B cell (primary cell): ENCODE measurements at regions of chr1 and their contacts with region 1.

Region 1: GRCh38 chr1:68120136-68120791 is 69.8 kb upstream of the DIRAS3 start:
- DNase-seq: peak; percentile 66
- ATAC-seq: peak; percentile 56
- H3K4me3 ChIP-seq: no peak overlapping the region
- H3K4me3 Mint-ChIP-seq: no peak overlapping the region
- H3K27ac ChIP-seq: no peak overlapping the region
- H3K27ac Mint-ChIP-seq: no peak overlapping the region
- H3K4me1 ChIP-seq: peaks cover 2 to 3% of the 10 kb centered on the region in 2 donors
- H3K4me1 Mint-ChIP-seq: peaks cover 1% of the 10 kb centered on the region
- H3K27me3 ChIP-seq: no peaks in the 10 kb centered on the region
- H3K27me3 Mint-ChIP-seq: no peaks in the 10 kb centered on the region
- CTCF ChIP-seq: peak; percentile 80

Region 2: GRCh38 chr1:67908250-67908936 is 211.9 kb before region 1 on chr1:
- CTCF ChIA-PET with region 1: no interaction called
- POLR2A ChIA-PET with region 1: no interaction called
- intact Hi-C with region 1: no loop called
- DNase-seq: no peak
- ATAC-seq: no peak
- H3K4me3 ChIP-seq: no peak overlapping the region
- H3K4me3 Mint-ChIP-seq: no peak overlapping the region
- H3K27ac ChIP-seq: no peak overlapping the region
- H3K27ac Mint-ChIP-seq: no peak overlapping the region
- H3K4me1 ChIP-seq: no peaks in the 10 kb centered on the region
- H3K4me1 Mint-ChIP-seq: no peaks in the 10 kb centered on the region
- H3K27me3 ChIP-seq: peaks cover 0 to 3% (median 0%) of the 10 kb centered on the region in 4 experiments
- H3K27me3 Mint-ChIP-seq: peaks cover 3% of the 10 kb centered on the region
- CTCF ChIP-seq: no peak

Region 3: GRCh38 chr1:67945733-67946374 is 174.4 kb before region 1 on chr1:
- CTCF ChIA-PET with region 1: no interaction called
- POLR2A ChIA-PET with region 1: no interaction called
- intact Hi-C with region 1: no loop called
- DNase-seq: no peak
- ATAC-seq: no peak
- H3K4me3 ChIP-seq: no peak overlapping the region
- H3K4me3 Mint-ChIP-seq: no peak overlapping the region
- H3K27ac ChIP-seq: no peak overlapping the region
- H3K27ac Mint-ChIP-seq: no peak overlapping the region
- H3K4me1 ChIP-seq: no peaks in the 10 kb centered on the region
- H3K4me1 Mint-ChIP-seq: no peaks in the 10 kb centered on the region
- H3K27me3 ChIP-seq: no peaks in the 10 kb centered on the region
- H3K27me3 Mint-ChIP-seq: peaks cover 3% of the 10 kb centered on the region
- CTCF ChIP-seq: no peak

Region 4: GRCh38 chr1:68103884-68104554 is 16.2 kb before region 1 on chr1:
- CTCF ChIA-PET with region 1: interaction called, 36 read pairs
- POLR2A ChIA-PET with region 1: no interaction called
- intact Hi-C with region 1: no loop called
- DNase-seq: no peak
- ATAC-seq: no peak
- H3K4me3 ChIP-seq: no peak overlapping the region
- H3K4me3 Mint-ChIP-seq: no peak overlapping the region
- H3K27ac ChIP-seq: no peak overlapping the region
- H3K27ac Mint-ChIP-seq: no peak overlapping the region
- H3K4me1 ChIP-seq: no peaks in the 10 kb centered on the region
- H3K4me1 Mint-ChIP-seq: no peaks in the 10 kb centered on the region
- H3K27me3 ChIP-seq: peaks cover 0 to 5% (median 0%) of the 10 kb centered on the region in 4 experiments
- H3K27me3 Mint-ChIP-seq: peaks cover 23% of the 10 kb centered on the region
- CTCF ChIP-seq: no peak

Region 5: DNA sequence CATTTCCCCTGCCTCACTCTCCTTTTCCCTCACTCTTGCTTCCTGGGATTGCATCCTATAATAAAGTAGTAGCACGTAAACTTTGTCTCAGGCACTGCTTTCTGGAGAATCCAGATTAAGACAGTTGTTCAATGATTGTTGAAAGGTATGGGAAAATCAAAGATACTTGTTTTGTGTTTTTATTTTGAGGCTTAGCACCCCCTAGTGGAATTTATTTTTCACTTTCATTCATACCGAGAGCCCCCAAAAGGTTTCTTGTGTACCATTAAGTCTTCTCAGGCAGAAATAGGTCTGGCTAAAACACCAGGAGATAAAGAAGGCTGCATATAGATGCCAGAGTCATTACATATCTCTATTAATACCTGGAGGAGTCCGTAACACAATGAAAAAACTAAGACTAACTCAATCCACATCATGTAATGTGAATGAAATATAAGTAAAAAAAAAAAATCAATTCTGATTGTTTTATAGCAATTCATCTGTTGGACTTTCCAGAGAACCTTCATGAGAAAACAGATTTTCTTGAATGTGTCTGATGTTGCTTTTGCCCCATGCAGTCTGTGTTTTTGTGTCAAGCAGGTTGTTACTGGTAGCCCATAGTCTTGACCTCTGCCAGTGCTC is 226.0 kb after region 1 on chr1:
- CTCF ChIA-PET with region 1: interaction called, 3 read pairs
- POLR2A ChIA-PET with region 1: no interaction called
- intact Hi-C with region 1: loop called (anchors 10 kb)
- DNase-seq: no peak
- ATAC-seq: no peak
- H3K4me3 ChIP-seq: no peak overlapping the region
- H3K4me3 Mint-ChIP-seq: peak overlapping the region; percentile 12
- H3K27ac ChIP-seq: no peak overlapping the region
- H3K27ac Mint-ChIP-seq: peak overlapping the region; percentile 29
- H3K4me1 ChIP-seq: peaks cover 7 to 18% of the 10 kb centered on the region in 2 donors
- H3K4me1 Mint-ChIP-seq: peaks cover 26% of the 10 kb centered on the region
- H3K27me3 ChIP-seq: no peaks in the 10 kb centered on the region
- H3K27me3 Mint-ChIP-seq: peaks cover 5% of the 10 kb centered on the region
- CTCF ChIP-seq: peak; percentile 25

Region 6: GRCh38 chr1:68442822-68443556 is 322.7 kb after region 1 on chr1:
- CTCF ChIA-PET with region 1: interaction called, 53 read pairs
- POLR2A ChIA-PET with region 1: no interaction called
- intact Hi-C with region 1: loop called (anchors 1 kb)
- DNase-seq: peak; percentile 52
- ATAC-seq: no peak
- H3K4me3 ChIP-seq: no peak overlapping the region
- H3K4me3 Mint-ChIP-seq: no peak overlapping the region
- H3K27ac ChIP-seq: no peak overlapping the region
- H3K27ac Mint-ChIP-seq: no peak overlapping the region
- H3K4me1 ChIP-seq: no peaks in the 10 kb centered on the region
- H3K4me1 Mint-ChIP-seq: peaks cover 5% of the 10 kb centered on the region
- H3K27me3 ChIP-seq: peaks cover 0 to 4% (median 0%) of the 10 kb centered on the region in 4 experiments
- H3K27me3 Mint-ChIP-seq: peaks cover 20% of the 10 kb centered on the region
- CTCF ChIP-seq: peak; percentile 77

Region 7: DNA sequence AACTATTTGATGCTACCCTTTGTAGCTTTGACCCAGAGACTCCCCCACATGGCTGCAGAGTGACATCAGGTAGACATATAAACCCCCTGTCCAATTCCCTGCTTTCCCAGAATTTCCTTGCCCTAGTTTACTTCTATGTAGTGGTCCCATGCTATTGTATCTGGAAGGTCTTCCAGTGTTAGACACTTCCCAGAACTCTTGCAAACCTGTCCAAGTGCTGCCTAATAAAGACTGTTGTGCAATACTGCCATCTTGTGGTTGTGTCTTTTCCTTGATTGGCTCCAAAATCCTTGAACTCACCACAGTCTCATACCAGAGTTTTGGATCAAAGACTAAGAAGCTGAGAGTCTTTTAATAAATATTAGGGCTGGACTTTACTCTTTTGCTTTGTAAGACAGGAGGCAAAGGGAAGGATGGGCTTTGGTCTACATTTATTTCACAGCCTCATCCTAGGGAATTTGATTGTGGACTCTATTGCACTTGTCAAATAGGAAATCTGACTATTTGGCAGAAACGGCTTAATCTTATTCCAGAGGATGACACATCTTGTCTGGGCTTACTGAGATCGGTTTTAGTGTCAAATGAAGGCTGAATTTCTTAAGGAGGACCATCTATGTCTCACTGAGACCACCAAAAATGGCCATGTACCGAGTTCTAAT is 1617.4 kb after region 1 on chr1:
- CTCF ChIA-PET with region 1: interaction called, 68 read pairs
- POLR2A ChIA-PET with region 1: no interaction called
- intact Hi-C with region 1: no loop called
- DNase-seq: peak; percentile 50
- ATAC-seq: no peak
- H3K4me3 ChIP-seq: no peak overlapping the region
- H3K4me3 Mint-ChIP-seq: no peak overlapping the region
- H3K27ac ChIP-seq: no peak overlapping the region
- H3K27ac Mint-ChIP-seq: no peak overlapping the region
- H3K4me1 ChIP-seq: no peaks in the 10 kb centered on the region
- H3K4me1 Mint-ChIP-seq: no peaks in the 10 kb centered on the region
- H3K27me3 ChIP-seq: no peaks in the 10 kb centered on the region
- H3K27me3 Mint-ChIP-seq: no peaks in the 10 kb centered on the region
- CTCF ChIP-seq: peak; percentile 72